Endothelial cell of umbilical vein (primary cell): ENCODE measurements at regions of chr9 and their contacts with region 1.

Region 1: DNA sequence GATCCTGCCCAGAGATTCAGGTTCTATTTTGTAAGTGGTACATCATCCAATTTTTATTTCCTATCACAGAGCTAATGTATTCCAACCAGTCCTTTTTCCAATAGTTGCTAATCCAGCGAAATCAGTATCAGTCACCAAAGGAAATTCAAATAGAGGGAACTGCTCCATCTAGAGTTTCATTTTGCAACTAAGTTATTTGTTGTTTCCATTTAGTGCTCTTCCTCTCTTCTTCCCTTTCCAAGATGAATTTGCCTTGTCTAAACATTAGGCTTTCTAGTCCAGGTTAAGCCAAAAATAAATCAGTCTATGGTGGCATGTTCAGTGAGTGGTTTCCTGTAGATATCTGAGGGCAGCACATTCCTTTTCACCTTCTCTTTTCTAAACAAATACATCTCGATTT is 79.8 kb upstream of the SPATA31D4 start:
- DNase-seq: peak; percentile 96
- H3K4me3 ChIP-seq: no peak overlapping the region
- H3K27ac ChIP-seq: peak overlapping the region; percentile 69
- H3K4me1 ChIP-seq: peaks cover 46% of the 10 kb centered on the region
- H3K27me3 ChIP-seq: no peaks in the 10 kb centered on the region
- CTCF ChIP-seq: peak; percentile 14 to 29
- POLR2A ChIP-seq: no peak

Region 2: DNA sequence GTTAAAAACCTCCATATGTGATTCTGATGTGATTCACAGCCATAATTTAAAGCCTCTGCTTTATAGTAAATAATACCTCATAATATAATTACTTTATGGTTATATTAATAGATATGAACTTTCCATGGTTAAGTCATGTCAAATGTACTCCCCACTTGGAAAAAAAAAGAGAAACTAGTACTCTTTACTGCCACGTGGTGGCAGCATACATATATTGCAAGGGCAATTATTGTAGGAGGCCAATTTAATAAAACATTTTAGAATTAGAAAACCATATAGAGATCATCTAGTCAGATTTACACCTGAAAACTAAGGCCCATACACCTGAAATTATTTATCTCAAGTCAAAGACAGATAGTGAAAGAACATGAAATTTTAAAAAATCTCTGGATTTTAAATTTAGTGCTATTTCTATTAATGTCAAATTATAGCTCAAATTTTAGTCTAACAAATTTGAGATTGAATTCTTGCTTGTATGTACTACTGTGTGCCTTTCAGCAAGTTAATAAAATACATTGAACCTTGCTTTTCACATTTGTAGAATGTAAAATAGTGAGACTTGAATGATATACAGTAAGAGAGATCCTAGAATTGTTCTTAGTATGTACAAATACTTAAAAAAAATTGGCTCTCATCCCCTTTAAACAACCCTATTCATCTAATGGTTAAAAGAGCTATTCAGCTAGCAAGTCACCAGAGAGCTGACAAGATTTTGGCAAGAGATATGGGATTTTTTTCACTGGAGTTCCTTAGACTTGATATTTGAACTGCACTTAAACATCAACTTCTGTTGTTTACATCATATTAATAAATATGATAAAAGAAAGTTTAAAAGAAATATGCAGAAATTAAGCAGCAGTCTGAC is 1673.0 kb before region 1 on chr9:
- CTCF ChIA-PET with region 1: interaction called, 14 read pairs
- POLR2A ChIA-PET with region 1: no interaction called
- dilution Hi-C with region 1: no loop called
- intact Hi-C with region 1: no loop called
- DNase-seq: peak; percentile 45
- H3K4me3 ChIP-seq: no peak overlapping the region
- H3K27ac ChIP-seq: no peak overlapping the region
- H3K4me1 ChIP-seq: no peaks in the 10 kb centered on the region
- H3K27me3 ChIP-seq: no peaks in the 10 kb centered on the region
- CTCF ChIP-seq: peak; percentile 33 to 40
- POLR2A ChIP-seq: no peak

Region 3: DNA sequence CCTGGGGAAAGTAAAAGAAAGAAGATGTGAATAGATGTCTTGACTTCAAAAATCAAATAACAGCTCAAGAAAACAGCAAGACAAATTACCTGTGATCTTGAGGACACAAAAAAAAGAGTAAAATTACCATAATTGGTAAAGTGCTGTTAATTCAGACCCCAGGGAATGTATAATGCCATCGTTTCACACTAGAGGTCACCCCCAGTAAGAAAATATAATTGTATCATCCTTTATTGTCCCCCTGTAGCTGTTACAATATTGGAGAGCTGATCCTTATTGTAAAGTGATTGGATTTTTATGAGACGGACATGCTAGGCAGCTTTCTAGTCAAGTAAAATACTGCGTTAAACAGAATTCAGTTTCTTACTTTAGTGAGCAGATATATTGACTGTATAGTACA is 536.1 kb before region 1 on chr9:
- CTCF ChIA-PET with region 1: interaction called, 10 read pairs
- POLR2A ChIA-PET with region 1: no interaction called
- dilution Hi-C with region 1: no loop called
- intact Hi-C with region 1: no loop called
- DNase-seq: peak; percentile 32
- H3K4me3 ChIP-seq: no peak overlapping the region
- H3K27ac ChIP-seq: no peak overlapping the region
- H3K4me1 ChIP-seq: no peaks in the 10 kb centered on the region
- H3K27me3 ChIP-seq: no peaks in the 10 kb centered on the region
- CTCF ChIP-seq: peak in 1 of 2 donors; percentile 9
- POLR2A ChIP-seq: no peak

Region 4: DNA sequence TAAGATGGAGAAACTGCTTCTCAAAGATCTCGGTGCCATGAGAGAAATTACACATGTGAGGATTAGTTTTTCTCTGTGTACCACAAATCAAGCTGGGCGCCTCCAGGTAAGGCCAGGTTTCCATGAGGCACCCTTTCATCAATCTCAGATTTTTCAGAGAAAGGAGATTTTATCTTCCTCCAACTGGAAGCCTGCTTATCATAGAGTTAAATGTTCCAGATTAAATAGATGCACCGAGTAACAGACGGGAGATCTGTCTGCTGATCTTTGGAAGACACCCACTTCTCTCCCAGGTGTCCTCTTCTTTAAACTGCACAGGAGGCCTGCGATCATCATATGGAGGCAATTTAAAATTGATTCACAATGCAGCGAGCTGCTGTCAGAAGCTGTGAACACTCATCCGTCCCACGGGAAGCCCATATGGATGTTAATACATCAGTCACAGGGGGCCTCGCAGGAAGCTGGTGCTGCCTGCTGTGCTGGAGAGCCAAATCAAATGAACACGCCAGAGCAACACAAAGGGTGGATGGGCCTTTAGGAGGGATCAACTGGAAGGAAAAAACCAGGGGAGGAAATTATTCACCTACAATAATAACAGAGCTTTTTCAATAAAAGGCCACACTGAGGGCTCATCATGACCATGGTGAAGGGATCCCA is 252.5 kb before region 1 on chr9:
- CTCF ChIA-PET with region 1: no interaction called
- POLR2A ChIA-PET with region 1: no interaction called
- dilution Hi-C with region 1: no loop called
- intact Hi-C with region 1: loop called (anchors 2 kb)
- DNase-seq: peak; percentile 94
- H3K4me3 ChIP-seq: peak overlapping the region in 1 of 3 experiments; percentile 21
- H3K27ac ChIP-seq: peak overlapping the region; percentile 87
- H3K4me1 ChIP-seq: peaks cover 52% of the 10 kb centered on the region
- H3K27me3 ChIP-seq: no peaks in the 10 kb centered on the region
- CTCF ChIP-seq: no peak
- POLR2A ChIP-seq: peak; percentile 22

Region 5: DNA sequence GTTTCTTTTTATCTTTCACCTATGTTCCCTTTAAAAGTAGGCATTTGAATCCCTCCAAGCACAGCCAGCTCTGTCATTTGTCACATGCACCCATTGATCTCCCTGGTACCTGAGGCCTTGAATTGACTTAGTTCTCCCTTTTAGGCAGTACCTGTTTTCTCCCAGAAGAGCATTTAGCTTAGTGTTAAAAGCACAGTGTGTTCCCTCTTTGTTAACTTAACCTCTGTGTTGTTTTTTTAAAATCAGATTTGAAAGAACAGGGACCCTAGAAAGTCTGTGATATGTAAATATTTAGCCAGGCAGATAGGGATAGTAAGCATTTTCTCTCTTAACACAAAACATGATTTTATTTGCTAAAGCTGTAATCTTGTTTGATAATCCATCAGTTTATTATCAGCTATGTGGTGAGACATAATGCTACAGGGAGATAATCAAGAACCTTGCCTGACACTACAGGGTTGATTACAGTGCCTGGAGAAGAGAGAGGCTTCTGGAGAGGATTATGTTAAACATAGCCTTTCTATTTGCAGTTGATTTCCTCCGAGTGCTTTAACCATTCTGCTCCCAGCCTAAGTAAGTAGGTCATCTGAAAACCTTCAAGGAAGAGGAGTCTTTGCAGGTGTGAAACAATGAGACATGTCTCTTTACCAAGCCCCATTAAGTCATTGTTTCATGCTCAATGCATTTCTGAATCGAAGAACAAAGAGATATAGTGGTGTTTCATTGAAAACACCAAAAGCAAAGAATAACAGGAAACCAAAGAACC is 33.9 kb before region 1 on chr9:
- CTCF ChIA-PET with region 1: no interaction called
- POLR2A ChIA-PET with region 1: no interaction called
- dilution Hi-C with region 1: no loop called
- intact Hi-C with region 1: loop called (anchors 1 kb)
- DNase-seq: peak; percentile 61
- H3K4me3 ChIP-seq: peak overlapping the region in 1 of 3 experiments; percentile 19
- H3K27ac ChIP-seq: peak overlapping the region; percentile 55
- H3K4me1 ChIP-seq: peaks cover 21% of the 10 kb centered on the region
- H3K27me3 ChIP-seq: no peaks in the 10 kb centered on the region
- CTCF ChIP-seq: no peak
- POLR2A ChIP-seq: no peak

Region 6: DNA sequence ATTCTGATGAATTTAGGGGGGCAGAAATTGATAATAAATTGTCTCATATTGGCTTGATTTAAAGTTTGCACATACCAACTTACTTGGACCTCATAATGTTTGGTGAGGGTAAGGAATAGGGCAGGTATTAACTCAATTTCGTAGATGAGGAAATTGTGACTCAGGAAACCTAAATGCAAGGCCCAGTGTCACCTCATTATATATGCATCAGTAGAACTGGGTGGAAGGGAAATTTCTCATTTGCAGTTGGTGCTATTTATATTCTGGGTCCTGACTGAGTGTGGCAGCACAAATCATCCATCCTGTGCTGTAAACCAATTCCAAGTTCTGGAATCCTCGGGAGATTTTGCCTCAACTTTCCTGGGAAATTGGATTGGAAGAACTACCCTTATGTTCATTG is 243.1 kb after region 1 on chr9:
- CTCF ChIA-PET with region 1: no interaction called
- POLR2A ChIA-PET with region 1: no interaction called
- dilution Hi-C with region 1: no loop called
- intact Hi-C with region 1: no loop called
- DNase-seq: no peak
- H3K4me3 ChIP-seq: no peak overlapping the region
- H3K27ac ChIP-seq: no peak overlapping the region
- H3K4me1 ChIP-seq: no peaks in the 10 kb centered on the region
- H3K27me3 ChIP-seq: no peaks in the 10 kb centered on the region
- CTCF ChIP-seq: no peak
- POLR2A ChIP-seq: no peak

Region 7: DNA sequence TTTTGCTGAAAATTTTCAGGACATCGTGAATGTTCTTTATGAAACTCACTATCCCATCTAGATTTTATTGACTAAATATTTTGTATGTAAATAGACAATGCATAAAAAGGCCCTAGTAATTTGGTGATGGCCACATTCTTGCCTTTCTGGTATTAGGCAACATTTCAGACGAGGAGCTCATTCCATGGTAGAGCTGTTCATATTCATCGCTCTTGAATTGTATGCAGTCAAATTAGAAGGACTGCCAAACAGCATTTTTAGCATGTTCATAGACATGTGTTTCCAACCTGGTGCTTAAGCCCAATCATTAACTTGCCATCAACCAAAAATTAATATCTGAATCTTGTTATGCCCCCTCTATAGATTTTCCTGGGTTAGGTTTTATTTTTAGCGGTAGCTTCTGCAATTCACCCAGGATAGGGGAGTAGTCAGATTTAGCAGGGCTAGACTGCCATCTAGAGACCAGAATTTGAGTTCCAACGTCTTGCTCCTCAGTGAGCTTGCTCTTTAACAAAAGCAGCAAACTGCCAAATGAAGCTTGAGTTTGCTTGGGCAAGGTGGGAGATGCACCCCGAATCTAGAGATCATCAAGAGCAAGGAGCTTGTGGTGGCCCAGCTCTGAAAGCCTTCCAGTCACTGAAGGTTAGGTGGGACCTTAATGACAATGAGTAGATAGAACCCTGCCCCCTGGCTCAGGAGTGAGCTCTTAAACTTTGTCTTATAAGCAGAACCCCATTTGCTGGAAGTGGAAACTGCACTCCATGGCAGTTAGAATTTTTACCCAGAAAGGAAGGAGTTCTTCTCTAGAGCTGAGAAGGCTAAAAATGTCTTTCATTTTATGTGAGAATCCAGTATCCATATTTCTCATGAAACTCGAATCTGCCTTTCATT is 758.3 kb after region 1 on chr9:
- CTCF ChIA-PET with region 1: no interaction called
- POLR2A ChIA-PET with region 1: no interaction called
- dilution Hi-C with region 1: no loop called
- intact Hi-C with region 1: loop called (anchors 2 kb)
- DNase-seq: peak; percentile 57
- H3K4me3 ChIP-seq: no peak overlapping the region
- H3K27ac ChIP-seq: no peak overlapping the region
- H3K4me1 ChIP-seq: no peaks in the 10 kb centered on the region
- H3K27me3 ChIP-seq: no peaks in the 10 kb centered on the region
- CTCF ChIP-seq: peak; percentile 22 to 32
- POLR2A ChIP-seq: no peak